CD4-positive, alpha-beta memory T cell (primary cell): ENCODE measurements at regions of chr15 and their contacts with region 1.

Region 1: DNA sequence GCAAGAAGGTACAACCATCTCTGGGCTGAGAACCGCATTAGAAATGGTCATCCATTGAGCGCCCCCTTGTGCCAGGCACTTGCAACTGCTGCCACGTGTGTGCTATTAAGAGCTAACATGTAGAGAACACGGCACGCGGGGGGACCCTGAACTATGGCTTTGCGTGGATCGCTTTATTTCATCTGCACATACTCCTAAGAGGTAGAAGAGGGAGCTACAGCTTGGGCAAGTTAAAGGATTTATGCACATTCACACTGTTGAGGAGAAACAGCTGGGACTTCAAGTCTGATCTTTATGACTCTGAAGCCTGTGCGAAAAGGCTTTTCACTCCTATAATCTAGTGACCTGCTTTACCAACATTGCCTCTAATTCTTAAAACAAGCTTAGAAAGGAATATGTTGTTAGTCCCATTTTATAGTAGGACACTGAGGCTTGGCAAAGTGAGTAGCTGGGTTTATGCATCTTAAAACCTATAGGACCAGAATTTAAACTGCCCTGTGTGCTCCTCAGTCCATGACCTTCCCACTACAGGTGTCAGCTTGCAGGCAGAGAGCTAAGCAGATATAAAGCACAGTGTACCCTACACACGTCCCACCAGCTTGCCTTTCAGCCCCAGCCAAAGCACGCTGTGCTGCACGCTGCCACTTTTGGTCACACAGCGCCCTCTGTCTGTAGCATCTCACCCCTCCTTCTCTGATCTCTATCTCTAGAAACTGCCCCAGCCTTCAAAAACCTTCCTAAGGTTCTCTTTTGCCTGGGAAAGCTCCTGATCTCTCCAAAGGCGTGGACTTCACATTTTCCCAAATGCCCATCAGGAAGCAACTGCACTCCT is 57.8 kb downstream of the STARD5 start:
- DNase-seq: peak; percentile 71 to 75 (median 73)
- H3K4me3 ChIP-seq: peak overlapping the region in 1 of 2 donors; percentile 9
- H3K4me3 Mint-ChIP-seq: peak overlapping the region; percentile 66 to 90 (median 79)
- H3K27ac ChIP-seq: no peak overlapping the region
- H3K27ac Mint-ChIP-seq: peak overlapping the region in 5 of 7 donors; percentile 11 to 65 (median 32)
- H3K4me1 ChIP-seq: peaks cover 12% of the 10 kb centered on the region
- H3K4me1 Mint-ChIP-seq: peaks cover 12 to 16% (median 14%) of the 10 kb centered on the region in 4 donors
- H3K27me3 ChIP-seq: no peaks in the 10 kb centered on the region
- H3K27me3 Mint-ChIP-seq: peaks cover 1 to 4% of the 10 kb centered on the region in 2 donors

Region 2: DNA sequence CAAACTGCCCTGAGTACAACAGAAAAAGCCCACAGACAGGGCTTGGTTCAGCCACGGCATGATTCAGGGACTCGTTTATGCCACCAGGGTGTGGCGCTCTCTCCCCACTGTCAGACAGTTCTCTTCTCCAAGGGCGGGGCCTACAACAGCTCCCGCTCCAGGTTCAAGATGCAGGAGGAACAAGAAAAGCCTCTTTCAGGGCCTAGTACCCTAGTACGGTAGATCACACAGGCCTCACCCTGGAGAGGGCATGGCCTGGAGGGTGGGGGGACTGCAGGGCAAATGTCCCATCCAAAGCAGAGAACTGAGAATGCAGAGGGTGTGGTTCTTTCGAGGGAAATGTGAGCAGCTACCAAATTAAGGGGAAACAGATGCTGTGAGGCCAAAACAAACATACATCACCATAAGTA is 288.5 kb before region 1 on chr15:
- CTCF ChIA-PET with region 1: interaction called, 33 read pairs
- POLR2A ChIA-PET with region 1: no interaction called
- intact Hi-C with region 1: no loop called
- DNase-seq: peak in 1 of 5 donors; percentile 29
- H3K4me3 ChIP-seq: no peak overlapping the region
- H3K4me3 Mint-ChIP-seq: no peak overlapping the region
- H3K27ac ChIP-seq: no peak overlapping the region
- H3K27ac Mint-ChIP-seq: peak overlapping the region; percentile 5 to 85 (median 80)
- H3K4me1 ChIP-seq: peaks cover 16% of the 10 kb centered on the region
- H3K4me1 Mint-ChIP-seq: peaks cover 30 to 53% (median 39%) of the 10 kb centered on the region in 4 donors
- H3K27me3 ChIP-seq: no peaks in the 10 kb centered on the region
- H3K27me3 Mint-ChIP-seq: no peaks in the 10 kb centered on the region

Region 3: DNA sequence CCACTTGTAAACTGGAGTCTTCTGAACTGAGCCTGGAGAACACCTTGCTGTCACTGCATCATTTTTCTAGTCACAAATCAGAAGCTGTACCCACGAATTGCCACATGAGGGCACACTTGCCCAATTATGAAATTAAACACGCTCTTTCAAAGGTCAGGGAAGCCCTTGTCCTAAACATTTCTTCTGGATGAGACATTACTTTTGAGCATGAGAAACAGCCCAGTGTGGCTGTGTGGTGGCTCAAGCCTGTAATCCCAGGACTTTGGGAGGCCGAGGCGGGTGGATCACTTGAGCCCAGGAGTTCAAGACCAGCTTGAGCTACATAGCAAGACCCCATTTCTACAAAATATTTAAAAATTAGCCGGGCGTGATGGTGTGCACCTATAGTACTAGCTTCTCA is 159.6 kb before region 1 on chr15:
- CTCF ChIA-PET with region 1: interaction called, 131 read pairs
- POLR2A ChIA-PET with region 1: interaction called, 4 read pairs
- intact Hi-C with region 1: loop called (anchors 1 kb)
- DNase-seq: peak in 4 of 5 donors; percentile 25 to 35 (median 28)
- H3K4me3 ChIP-seq: no peak overlapping the region
- H3K4me3 Mint-ChIP-seq: no peak overlapping the region
- H3K27ac ChIP-seq: no peak overlapping the region
- H3K27ac Mint-ChIP-seq: peak overlapping the region in 1 of 7 donors; percentile 14
- H3K4me1 ChIP-seq: no peaks in the 10 kb centered on the region
- H3K4me1 Mint-ChIP-seq: no peaks in the 10 kb centered on the region
- H3K27me3 ChIP-seq: no peaks in the 10 kb centered on the region
- H3K27me3 Mint-ChIP-seq: peaks cover 17 to 20% of the 10 kb centered on the region in 2 donors

Region 4: DNA sequence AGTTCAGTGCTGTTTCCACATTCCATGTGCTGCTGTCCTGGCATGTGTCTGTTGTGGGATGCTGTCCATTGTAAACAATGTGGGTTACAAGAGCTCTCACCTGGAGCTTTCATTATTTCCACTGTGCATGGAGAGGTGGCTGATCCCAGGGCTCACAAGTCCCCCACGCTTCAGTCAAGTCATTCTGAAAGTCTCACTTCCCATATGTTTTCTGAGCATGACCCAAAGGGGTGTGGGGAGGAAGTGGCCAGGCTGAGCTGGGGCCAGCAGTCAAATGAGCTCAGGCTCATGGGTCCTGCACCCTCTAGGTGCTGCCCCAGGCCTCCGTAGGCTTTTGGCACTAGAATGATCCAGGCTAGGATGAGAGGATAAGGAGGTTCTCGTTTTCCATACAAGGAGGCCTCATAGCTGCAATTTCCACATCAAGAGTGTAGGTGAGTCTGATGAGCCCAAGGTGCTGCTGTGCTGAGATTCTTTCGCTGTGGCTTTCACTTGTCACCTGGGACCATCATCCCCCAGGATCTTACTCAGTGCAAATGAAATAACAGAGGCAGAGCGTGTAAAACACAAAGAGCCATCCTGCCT is 35.7 kb after region 1 on chr15:
- CTCF ChIA-PET with region 1: interaction called, 107 read pairs
- POLR2A ChIA-PET with region 1: interaction called, 14 read pairs
- intact Hi-C with region 1: no loop called
- DNase-seq: no peak
- H3K4me3 ChIP-seq: peak overlapping the region; percentile 77 to 87
- H3K4me3 Mint-ChIP-seq: peak overlapping the region; percentile 98 to 100 (median 100)
- H3K27ac ChIP-seq: peak overlapping the region; percentile 49
- H3K27ac Mint-ChIP-seq: peak overlapping the region; percentile 88 to 98 (median 96)
- H3K4me1 ChIP-seq: peaks cover 64% of the 10 kb centered on the region
- H3K4me1 Mint-ChIP-seq: peaks cover 46 to 79% (median 53%) of the 10 kb centered on the region in 4 donors
- H3K27me3 ChIP-seq: no peaks in the 10 kb centered on the region
- H3K27me3 Mint-ChIP-seq: no peaks in the 10 kb centered on the region

Region 5: GRCh38 chr15:81357223-81357622 is 91.1 kb after region 1 on chr15:
- CTCF ChIA-PET with region 1: interaction called, 27 read pairs
- POLR2A ChIA-PET with region 1: no interaction called
- intact Hi-C with region 1: no loop called
- DNase-seq: no peak
- H3K4me3 ChIP-seq: no peak overlapping the region
- H3K4me3 Mint-ChIP-seq: peak overlapping the region in 1 of 8 donors; percentile 3
- H3K27ac ChIP-seq: no peak overlapping the region
- H3K27ac Mint-ChIP-seq: no peak overlapping the region
- H3K4me1 ChIP-seq: no peaks in the 10 kb centered on the region
- H3K4me1 Mint-ChIP-seq: no peaks in the 10 kb centered on the region
- H3K27me3 ChIP-seq: no peaks in the 10 kb centered on the region
- H3K27me3 Mint-ChIP-seq: peaks cover 3 to 7% of the 10 kb centered on the region in 2 donors

Region 6: DNA sequence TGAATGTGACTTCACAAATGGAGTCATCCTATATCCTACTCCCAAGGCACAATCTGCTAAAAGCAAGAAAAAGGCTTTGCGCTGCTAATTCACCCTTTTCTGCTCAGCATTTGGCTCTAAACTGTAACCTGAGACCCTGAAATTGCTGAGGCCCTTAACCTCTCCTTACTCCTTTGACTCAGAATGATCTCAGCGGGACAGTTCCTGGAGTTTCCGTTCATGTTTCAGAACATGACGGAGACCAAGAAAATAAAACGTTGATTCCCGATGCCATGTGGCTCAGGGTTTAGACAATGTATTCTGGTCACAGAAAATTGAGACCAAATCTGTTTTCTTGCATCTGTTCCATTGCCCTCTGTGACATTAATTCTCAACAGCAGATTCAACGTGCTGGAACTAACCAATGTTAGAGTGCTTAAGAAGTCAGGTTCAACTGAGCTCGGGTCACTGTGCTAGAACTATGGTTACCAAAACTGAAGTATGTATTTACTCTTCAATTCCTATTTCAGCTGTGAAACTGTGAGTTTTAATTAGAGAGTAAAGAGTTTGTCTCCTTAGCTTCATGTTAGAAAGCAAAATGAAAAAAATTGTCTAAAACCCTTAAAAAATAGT is 153.3 kb after region 1 on chr15:
- CTCF ChIA-PET with region 1: interaction called, 19 read pairs
- POLR2A ChIA-PET with region 1: no interaction called
- intact Hi-C with region 1: no loop called
- DNase-seq: no peak
- H3K4me3 ChIP-seq: no peak overlapping the region
- H3K4me3 Mint-ChIP-seq: no peak overlapping the region
- H3K27ac ChIP-seq: no peak overlapping the region
- H3K27ac Mint-ChIP-seq: no peak overlapping the region
- H3K4me1 ChIP-seq: peaks cover 7% of the 10 kb centered on the region
- H3K4me1 Mint-ChIP-seq: peaks cover 0 to 6% (median 5%) of the 10 kb centered on the region in 4 donors
- H3K27me3 ChIP-seq: peaks cover 3% of the 10 kb centered on the region
- H3K27me3 Mint-ChIP-seq: peaks cover 5 to 14% of the 10 kb centered on the region in 2 donors

Region 7: GRCh38 chr15:81548365-81549120 is 282.4 kb after region 1 on chr15:
- CTCF ChIA-PET with region 1: no interaction called
- POLR2A ChIA-PET with region 1: no interaction called
- intact Hi-C with region 1: no loop called
- DNase-seq: no peak
- H3K4me3 ChIP-seq: no peak overlapping the region
- H3K4me3 Mint-ChIP-seq: no peak overlapping the region
- H3K27ac ChIP-seq: no peak overlapping the region
- H3K27ac Mint-ChIP-seq: no peak overlapping the region
- H3K4me1 ChIP-seq: no peaks in the 10 kb centered on the region
- H3K4me1 Mint-ChIP-seq: no peaks in the 10 kb centered on the region
- H3K27me3 ChIP-seq: no peaks in the 10 kb centered on the region
- H3K27me3 Mint-ChIP-seq: peaks cover 8 to 14% of the 10 kb centered on the region in 2 donors